ENCODE measurements at regions of chr2 and their contacts with region 1.

Region 1: GRCh38 chr2:26740346-26740745 is 23.7 kb upstream of the SLC35F6 start:
- DNase-seq: no peak
- H3K4me3 ChIP-seq: no peak overlapping the region
- H3K27ac ChIP-seq: no peak overlapping the region
- H3K4me1 ChIP-seq: no peaks in the 10 kb centered on the region; the same call in 1 of the 2 replicates
- H3K27me3 ChIP-seq: no peaks in the 10 kb centered on the region
- CTCF ChIP-seq: no peak

Region 2: DNA sequence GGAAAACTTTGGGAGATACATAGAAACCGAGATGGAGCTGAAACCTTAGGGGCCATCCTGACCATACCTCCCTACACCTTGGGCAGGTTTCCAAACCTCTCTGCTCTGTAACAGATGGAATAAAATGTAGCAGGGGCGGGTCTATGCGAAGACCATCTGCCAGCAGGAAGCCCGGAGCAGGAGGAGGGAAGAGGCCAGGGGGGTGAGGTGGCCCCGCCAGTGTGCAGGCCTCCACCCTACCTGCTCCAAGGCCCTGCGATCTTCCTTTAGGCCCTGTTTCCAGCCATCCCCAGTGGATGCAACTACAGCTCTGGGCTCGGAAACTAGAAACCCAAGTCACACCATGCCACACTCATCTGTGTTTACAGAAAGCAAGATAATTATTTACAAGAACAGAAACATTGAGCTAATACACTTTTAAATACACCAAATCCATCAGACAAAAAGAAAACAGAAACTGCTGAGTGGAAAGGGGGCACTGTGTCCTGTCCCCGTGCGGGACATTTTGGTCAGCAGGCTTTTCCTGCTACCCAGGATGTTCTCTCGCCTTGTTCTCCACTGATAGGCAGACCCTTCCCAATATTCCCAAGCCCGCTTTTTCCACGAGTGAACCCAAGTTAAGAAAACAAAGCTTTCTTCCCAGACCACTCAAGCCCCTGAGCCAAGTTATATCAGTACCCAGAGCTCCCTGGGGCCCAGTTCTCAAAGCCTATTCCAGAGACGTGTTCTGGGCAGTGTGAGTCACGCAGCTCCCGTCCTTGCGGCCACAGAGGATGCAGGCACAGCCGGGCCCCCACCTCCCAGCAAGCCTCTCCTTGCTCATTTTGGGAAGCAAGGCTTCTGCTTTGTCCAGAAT is 116.6 kb before region 1 on chr2:
- CTCF ChIA-PET with region 1: interaction called, 10 read pairs
- POLR2A ChIA-PET with region 1: no interaction called
- intact Hi-C with region 1: no loop called
- DNase-seq: no peak
- H3K4me3 ChIP-seq: no peak overlapping the region
- H3K27ac ChIP-seq: no peak overlapping the region
- H3K4me1 ChIP-seq: peaks cover 19% of the 10 kb centered on the region
- H3K27me3 ChIP-seq: peaks cover 16% of the 10 kb centered on the region; the same call in 1 of the 2 replicates
- CTCF ChIP-seq: no peak

Region 3: DNA sequence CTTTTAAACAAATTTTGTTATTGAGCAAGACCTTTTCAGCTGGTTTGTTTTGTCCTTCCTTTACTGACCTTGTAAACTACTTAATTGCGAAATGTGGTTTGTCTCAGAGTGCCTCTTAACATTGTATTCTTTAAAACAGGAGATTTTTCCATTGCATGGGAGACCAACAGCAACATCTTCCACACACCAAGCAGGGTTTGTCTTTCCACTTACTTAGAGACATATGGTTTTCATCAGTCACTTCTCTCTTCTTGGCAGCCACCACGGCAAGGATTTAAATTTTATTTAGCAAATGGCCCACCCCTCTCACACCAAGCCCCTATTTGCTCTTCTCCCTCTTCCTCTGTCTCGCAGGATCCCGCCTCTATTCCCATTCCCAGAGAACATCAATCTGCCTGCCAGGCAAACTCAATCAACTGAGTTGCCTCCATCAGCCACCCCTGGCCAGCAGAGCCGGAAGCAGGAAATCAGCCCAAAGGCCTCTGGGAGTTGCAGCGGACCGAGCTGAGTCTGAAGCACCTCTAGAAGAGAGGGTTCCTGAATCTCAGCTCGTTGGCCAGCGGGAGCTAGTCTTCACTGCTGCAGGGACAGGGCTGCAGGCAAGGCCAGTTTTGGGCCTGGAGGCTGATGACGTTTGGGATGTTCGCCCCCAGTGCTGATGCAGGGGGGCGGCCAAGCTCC is 87.8 kb before region 1 on chr2:
- CTCF ChIA-PET with region 1: no interaction called
- POLR2A ChIA-PET with region 1: no interaction called
- intact Hi-C with region 1: no loop called
- DNase-seq: no peak
- H3K4me3 ChIP-seq: no peak overlapping the region
- H3K27ac ChIP-seq: no peak overlapping the region
- H3K4me1 ChIP-seq: 0 out of 2 replicates have a peak, but pooled peaks cover 4% of the 10 kb centered on the region
- H3K27me3 ChIP-seq: no peaks in the 10 kb centered on the region
- CTCF ChIP-seq: no peak